MCF 10A (cell line): ENCODE measurements at regions of chr22 and their contacts with region 1.

Region 1: DNA sequence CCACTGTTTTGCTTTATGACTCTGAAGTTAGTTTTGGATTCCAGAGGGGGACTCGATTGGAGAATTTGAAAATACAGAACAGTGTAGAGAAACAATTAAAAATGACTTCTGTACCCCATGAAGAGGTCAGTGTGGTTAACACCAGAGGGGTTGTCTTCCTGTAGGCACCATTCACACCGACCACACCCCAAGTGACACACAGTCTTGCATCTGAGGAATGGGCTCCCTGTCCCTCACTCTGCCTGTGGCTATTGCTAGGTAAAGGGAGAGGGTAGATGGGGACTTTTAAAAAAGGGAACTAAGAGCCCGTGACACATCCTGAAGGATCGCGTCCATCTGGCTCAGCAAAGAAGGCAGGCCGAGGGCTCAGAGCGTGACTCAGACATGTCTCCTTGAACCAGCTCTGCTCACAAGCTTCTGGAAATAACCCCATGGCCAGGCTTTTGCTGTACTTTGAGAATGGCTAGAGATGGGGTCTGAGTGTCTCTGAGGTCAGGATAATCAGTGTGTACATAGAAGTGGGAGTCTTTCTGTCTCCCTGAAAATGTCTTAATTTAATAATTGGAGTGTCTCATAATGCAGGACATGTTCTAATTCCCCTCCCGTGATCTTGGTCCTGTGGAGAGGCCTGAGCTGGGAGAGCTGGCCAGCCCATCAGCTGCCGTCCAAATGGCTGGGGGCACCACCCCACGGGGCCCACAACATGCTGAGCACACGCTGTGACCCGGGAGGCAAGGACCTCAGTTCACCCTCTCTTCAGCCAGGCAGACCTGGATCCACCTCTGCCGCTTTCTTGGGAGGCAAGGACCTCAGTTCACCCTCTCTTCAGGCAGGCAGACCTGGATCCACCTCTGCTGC is 39.3 kb downstream of the SGSM1 start:
- DNase-seq: no peak
- H3K4me3 Mint-ChIP-seq: no peak overlapping the region
- H3K27ac Mint-ChIP-seq: no peak overlapping the region
- H3K4me1 Mint-ChIP-seq: no peaks in the 10 kb centered on the region
- H3K27me3 Mint-ChIP-seq: peaks cover 86% of the 10 kb centered on the region
- CTCF ChIP-seq: no peak

Region 2: GRCh38 chr22:24230911-24231656 is 614.2 kb before region 1 on chr22:
- CTCF ChIA-PET with region 1: no interaction called
- POLR2A ChIA-PET with region 1: no interaction called
- intact Hi-C with region 1: no loop called
- DNase-seq: no peak
- H3K4me3 Mint-ChIP-seq: no peak overlapping the region
- H3K27ac Mint-ChIP-seq: no peak overlapping the region
- H3K4me1 Mint-ChIP-seq: no peaks in the 10 kb centered on the region
- H3K27me3 Mint-ChIP-seq: no peaks in the 10 kb centered on the region
- CTCF ChIP-seq: peak; percentile 36

Region 3: GRCh38 chr22:24758164-24758799 is 87.0 kb before region 1 on chr22:
- CTCF ChIA-PET with region 1: interaction called, 18 read pairs
- POLR2A ChIA-PET with region 1: no interaction called
- intact Hi-C with region 1: no loop called
- DNase-seq: peak; percentile 71
- H3K4me3 Mint-ChIP-seq: no peak overlapping the region
- H3K27ac Mint-ChIP-seq: no peak overlapping the region
- H3K4me1 Mint-ChIP-seq: no peaks in the 10 kb centered on the region
- H3K27me3 Mint-ChIP-seq: peaks cover 53% of the 10 kb centered on the region
- CTCF ChIP-seq: peak; percentile 57

Region 4: DNA sequence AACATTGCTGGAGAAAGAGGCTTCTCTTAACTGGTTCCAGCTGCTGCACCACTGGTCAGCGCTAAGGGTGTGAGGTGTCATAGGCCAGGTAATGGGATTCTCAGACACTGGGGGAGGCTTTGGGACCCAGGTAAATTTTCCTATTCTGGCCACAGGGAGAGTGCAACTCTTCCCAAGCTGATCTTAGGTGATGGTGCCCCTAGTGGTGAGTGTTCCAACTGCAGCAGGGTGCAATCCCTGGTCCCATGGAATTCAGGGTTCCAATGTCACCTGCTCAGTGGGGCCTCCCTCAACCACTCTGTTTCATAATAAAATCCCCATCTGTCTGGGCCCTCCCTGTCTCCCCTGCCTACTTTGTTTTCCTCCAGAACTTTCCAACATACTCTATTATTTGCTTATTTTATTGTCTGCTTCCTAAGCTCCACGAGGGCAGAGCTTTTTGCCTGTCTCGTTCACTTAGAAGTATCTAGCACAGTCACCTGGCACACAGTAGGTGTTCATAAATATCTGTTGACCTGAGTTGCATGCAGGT is 42.2 kb before region 1 on chr22:
- CTCF ChIA-PET with region 1: interaction called, 13 read pairs
- POLR2A ChIA-PET with region 1: no interaction called
- intact Hi-C with region 1: no loop called
- DNase-seq: peak; percentile 54
- H3K4me3 Mint-ChIP-seq: no peak overlapping the region
- H3K27ac Mint-ChIP-seq: no peak overlapping the region
- H3K4me1 Mint-ChIP-seq: no peaks in the 10 kb centered on the region
- H3K27me3 Mint-ChIP-seq: peaks cover 28% of the 10 kb centered on the region
- CTCF ChIP-seq: peak; percentile 81

Region 5: GRCh38 chr22:24859587-24859986 is 14.3 kb after region 1 on chr22:
- CTCF ChIA-PET with region 1: interaction called, 12 read pairs
- POLR2A ChIA-PET with region 1: no interaction called
- intact Hi-C with region 1: no loop called
- DNase-seq: no peak
- H3K4me3 Mint-ChIP-seq: no peak overlapping the region
- H3K27ac Mint-ChIP-seq: no peak overlapping the region
- H3K4me1 Mint-ChIP-seq: no peaks in the 10 kb centered on the region
- H3K27me3 Mint-ChIP-seq: peaks cover 68% of the 10 kb centered on the region
- CTCF ChIP-seq: no peak

Region 6: DNA sequence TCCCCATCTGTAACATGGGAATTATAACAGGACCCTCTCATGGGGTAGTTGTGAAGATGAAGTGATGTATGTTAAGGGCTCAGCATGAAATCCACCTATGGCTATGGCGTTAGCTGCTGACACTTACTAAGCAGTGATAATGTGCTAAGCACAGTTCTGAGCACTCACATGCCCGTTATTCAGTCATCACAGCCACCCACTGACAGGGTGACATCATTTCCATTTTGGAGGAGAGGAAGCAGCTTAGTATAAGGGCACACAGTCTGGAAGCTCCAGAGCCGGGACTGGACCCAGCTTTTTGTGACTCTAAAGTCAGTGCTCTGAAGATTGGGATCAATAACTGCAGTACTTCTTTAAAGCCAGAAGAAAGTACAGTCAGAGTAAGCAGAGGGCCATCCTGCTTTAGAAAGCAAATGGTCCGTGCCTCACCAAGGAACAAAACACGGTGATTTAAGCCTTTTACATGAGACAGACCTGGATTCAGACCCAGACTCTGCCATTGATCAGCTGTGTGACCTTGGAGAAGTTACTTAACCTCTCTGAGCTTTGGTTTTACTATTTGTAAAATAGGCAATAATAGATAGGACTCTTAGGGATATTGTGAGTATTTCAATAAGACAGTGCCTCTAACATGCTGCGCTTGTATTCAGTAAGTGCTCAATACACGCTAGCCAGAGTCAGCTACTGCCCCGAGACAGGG is 22.2 kb after region 1 on chr22:
- CTCF ChIA-PET with region 1: interaction called, 10 read pairs
- POLR2A ChIA-PET with region 1: no interaction called
- intact Hi-C with region 1: no loop called
- DNase-seq: no peak
- H3K4me3 Mint-ChIP-seq: no peak overlapping the region
- H3K27ac Mint-ChIP-seq: no peak overlapping the region
- H3K4me1 Mint-ChIP-seq: no peaks in the 10 kb centered on the region
- H3K27me3 Mint-ChIP-seq: peaks cover 63% of the 10 kb centered on the region
- CTCF ChIP-seq: no peak